HCT116 (cell line): ENCODE measurements at regions of chr16 and their contacts with region 1.

Region 1: DNA sequence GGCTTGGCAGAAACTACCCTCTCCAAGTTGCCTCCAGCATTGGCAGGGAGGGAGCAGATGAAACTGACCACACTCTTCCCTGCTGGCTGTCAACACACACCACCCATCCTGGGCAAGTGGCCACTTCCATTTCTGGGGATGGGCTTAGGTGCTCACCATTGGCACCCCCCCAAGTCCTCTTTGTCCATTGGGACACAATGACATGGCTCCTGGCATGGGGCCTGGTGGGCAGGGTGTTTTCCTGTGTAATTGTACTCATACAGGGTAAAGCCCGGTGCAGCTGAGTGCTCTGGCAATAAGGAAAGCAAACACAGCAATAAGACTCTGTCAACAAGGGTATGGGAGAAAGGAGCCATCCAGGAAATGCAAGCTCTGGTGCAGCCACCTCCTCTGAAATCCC is 22.6 kb downstream of the SCNN1B start:
- DNase-seq: no peak
- ATAC-seq: no peak
- H3K4me3 ChIP-seq: no peak overlapping the region
- H3K27ac ChIP-seq: no peak overlapping the region
- H3K4me1 ChIP-seq: no peaks in the 10 kb centered on the region
- H3K27me3 ChIP-seq: no peaks in the 10 kb centered on the region
- CTCF ChIP-seq: no peak
- POLR2A ChIP-seq: no peak
- RAD21 ChIP-seq: no peak

Region 2: GRCh38 chr16:23227529-23227928 is 97.2 kb before region 1 on chr16:
- CTCF ChIA-PET with region 1: no interaction called
- POLR2A ChIA-PET with region 1: no interaction called
- RAD21 ChIA-PET with region 1: no interaction called
- intact Hi-C with region 1: loop called (anchors 10 kb)
- DNase-seq: no peak
- ATAC-seq: peak; percentile 42; the same call in 1 of the 2 replicates
- H3K4me3 ChIP-seq: no peak overlapping the region
- H3K27ac ChIP-seq: no peak overlapping the region
- H3K4me1 ChIP-seq: no peaks in the 10 kb centered on the region
- H3K27me3 ChIP-seq: no peaks in the 10 kb centered on the region
- CTCF ChIP-seq: no peak
- POLR2A ChIP-seq: no peak
- RAD21 ChIP-seq: no peak